Right cardiac atrium (tissue), 5 donors: ENCODE measurements at regions of chr11 and their contacts with region 1.

Region 1: GRCh38 chr11:83819933-83820549 is 533.9 kb upstream of the CCDC90B start:
- DNase-seq: no peak
- ATAC-seq: peak; percentile 57 to 67
- H3K4me3 ChIP-seq: no peak overlapping the region
- H3K27ac ChIP-seq: no peak overlapping the region
- H3K4me1 ChIP-seq: no peaks in the 10 kb centered on the region
- H3K27me3 ChIP-seq: no peaks in the 10 kb centered on the region

Region 2: GRCh38 chr11:82682003-82682751 is 1137.9 kb before region 1 on chr11:
- intact Hi-C with region 1: loop called in 1 of 4 experiments (anchors 10 kb)
- DNase-seq: no peak
- ATAC-seq: peak; percentile 81 to 85
- H3K4me3 ChIP-seq: no peak overlapping the region
- H3K27ac ChIP-seq: no peak overlapping the region
- H3K4me1 ChIP-seq: no peaks in the 10 kb centered on the region
- H3K27me3 ChIP-seq: no peaks in the 10 kb centered on the region

Region 3: DNA sequence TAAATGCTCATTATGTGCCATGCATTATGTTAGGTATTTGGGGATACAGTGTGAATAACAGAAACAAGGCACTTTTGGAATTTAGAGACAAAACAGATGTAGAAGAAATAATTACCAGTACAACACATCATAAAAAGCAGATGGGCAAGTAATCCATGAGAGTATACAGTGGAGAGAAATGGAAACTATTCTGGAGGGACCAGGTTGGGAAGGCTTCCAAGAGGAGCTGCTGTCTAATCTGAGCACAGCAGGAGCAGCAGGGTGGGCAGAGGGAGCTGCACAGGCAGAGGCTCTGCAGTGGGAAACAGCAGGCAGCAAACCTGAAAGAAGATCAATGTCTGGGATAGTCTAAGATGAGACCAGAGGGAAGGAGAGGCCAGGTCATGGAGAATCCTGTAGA is 265.2 kb before region 1 on chr11:
- intact Hi-C with region 1: no loop called
- DNase-seq: no peak
- ATAC-seq: no peak
- H3K4me3 ChIP-seq: no peak overlapping the region
- H3K27ac ChIP-seq: no peak overlapping the region
- H3K4me1 ChIP-seq: no peaks in the 10 kb centered on the region
- H3K27me3 ChIP-seq: no peaks in the 10 kb centered on the region